Activated B cell treated with CpG ODN at 0.5 μM for 24 hours (primary cell): ENCODE measurements at regions of chr11 and their contacts with region 1.

Region 1: GRCh38 chr11:35040221-35040942 is 98.6 kb upstream of the CD44 start:
- DNase-seq: no peak
- ATAC-seq: peak; percentile 66
- H3K4me3 Mint-ChIP-seq: peak overlapping the region; percentile 77
- H3K27ac Mint-ChIP-seq: peak overlapping the region; percentile 94
- H3K4me1 Mint-ChIP-seq: peaks cover 75% of the 10 kb centered on the region
- H3K27me3 Mint-ChIP-seq: no peaks in the 10 kb centered on the region
- CTCF ChIP-seq: no peak

Region 2: GRCh38 chr11:35006389-35007128 is 33.8 kb before region 1 on chr11:
- CTCF ChIA-PET with region 1: interaction called, 4 read pairs
- POLR2A ChIA-PET with region 1: interaction called, 17 read pairs
- intact Hi-C with region 1: loop called (anchors 1 kb)
- DNase-seq: peak; percentile 27
- ATAC-seq: peak; percentile 92
- H3K4me3 Mint-ChIP-seq: peak overlapping the region; percentile 28
- H3K27ac Mint-ChIP-seq: peak overlapping the region; percentile 84
- H3K4me1 Mint-ChIP-seq: peaks cover 58% of the 10 kb centered on the region
- H3K27me3 Mint-ChIP-seq: no peaks in the 10 kb centered on the region
- CTCF ChIP-seq: no peak

Region 3: GRCh38 chr11:35058669-35059434 is 18.5 kb after region 1 on chr11:
- CTCF ChIA-PET with region 1: interaction called, 4 read pairs
- POLR2A ChIA-PET with region 1: interaction called, 12 read pairs
- intact Hi-C with region 1: no loop called
- DNase-seq: no peak
- ATAC-seq: peak; percentile 82
- H3K4me3 Mint-ChIP-seq: peak overlapping the region; percentile 17
- H3K27ac Mint-ChIP-seq: peak overlapping the region; percentile 83
- H3K4me1 Mint-ChIP-seq: peaks cover 45% of the 10 kb centered on the region
- H3K27me3 Mint-ChIP-seq: no peaks in the 10 kb centered on the region
- CTCF ChIP-seq: no peak

Region 4: DNA sequence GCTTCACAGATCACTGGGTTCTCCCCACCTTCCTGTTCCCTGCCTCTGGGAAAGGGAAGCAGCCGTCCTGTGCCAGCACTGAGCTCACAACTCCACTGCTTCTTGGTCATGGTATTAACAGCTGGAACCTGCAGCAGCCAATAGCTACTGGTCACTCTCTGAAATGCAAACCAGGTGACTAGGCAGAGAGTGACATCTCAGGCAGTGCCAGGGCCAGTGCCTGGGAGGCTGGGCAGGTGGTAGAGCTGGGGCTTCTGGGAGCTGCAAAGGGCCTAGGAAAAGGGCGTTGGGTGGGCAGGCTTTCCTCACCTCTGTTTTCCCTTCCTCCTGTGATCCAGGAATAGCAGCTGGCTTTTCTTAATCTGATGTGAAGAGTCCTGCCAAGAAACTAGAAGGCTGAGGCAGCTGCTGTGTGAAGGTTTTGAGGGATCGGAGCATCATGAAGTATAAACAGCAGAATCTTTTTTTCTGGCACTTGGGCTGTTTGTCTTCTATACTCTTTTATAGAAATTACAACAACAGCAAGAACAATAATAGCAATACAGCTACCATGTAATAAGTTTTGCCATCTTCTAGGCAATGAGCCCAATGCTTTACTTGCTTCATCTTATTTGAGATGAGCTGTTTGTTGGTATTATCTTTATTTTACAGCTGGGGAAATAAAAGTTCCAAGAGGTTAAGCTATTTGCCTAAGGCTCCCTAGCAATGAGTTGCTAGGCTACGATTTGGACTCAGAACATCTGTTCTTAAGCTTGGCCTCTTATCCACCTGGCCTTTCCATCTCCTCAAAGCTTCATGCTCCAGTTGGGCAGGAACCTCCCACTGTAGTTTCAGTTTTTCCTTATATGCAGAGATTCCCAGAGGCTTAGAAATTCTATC is 76.6 kb after region 1 on chr11:
- CTCF ChIA-PET with region 1: no interaction called
- POLR2A ChIA-PET with region 1: interaction called, 4 read pairs
- intact Hi-C with region 1: loop called (anchors 1 kb)
- DNase-seq: no peak
- ATAC-seq: no peak
- H3K4me3 Mint-ChIP-seq: no peak overlapping the region
- H3K27ac Mint-ChIP-seq: peak overlapping the region; percentile 66
- H3K4me1 Mint-ChIP-seq: peaks cover 85% of the 10 kb centered on the region
- H3K27me3 Mint-ChIP-seq: no peaks in the 10 kb centered on the region
- CTCF ChIP-seq: no peak

Region 5: DNA sequence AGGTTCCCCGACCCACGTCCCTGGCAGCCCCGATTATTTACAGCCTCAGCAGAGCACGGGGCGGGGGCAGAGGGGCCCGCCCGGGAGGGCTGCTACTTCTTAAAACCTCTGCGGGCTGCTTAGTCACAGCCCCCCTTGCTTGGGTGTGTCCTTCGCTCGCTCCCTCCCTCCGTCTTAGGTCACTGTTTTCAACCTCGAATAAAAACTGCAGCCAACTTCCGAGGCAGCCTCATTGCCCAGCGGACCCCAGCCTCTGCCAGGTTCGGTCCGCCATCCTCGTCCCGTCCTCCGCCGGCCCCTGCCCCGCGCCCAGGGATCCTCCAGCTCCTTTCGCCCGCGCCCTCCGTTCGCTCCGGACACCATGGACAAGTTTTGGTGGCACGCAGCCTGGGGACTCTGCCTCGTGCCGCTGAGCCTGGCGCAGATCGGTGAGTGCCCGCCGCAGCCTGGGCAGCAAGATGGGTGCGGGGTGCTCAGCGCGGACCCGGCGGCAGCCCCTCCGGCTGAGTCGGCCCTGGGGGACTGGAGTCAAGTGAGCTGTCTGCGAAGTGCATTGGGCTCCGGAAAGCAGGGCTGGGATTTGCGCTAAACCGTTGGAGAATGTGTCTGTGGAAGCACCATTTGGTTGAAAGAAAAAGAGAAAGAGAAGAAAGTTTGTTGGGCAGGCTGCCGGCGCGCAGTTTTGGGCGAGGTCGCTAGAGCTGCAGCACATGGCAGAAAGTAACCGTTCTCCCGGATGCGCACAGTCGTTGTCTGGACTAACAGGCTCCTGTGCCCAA is 98.8 kb after region 1 on chr11 and contains the start of gene CD44:
- CTCF ChIA-PET with region 1: interaction called, 4 read pairs
- POLR2A ChIA-PET with region 1: interaction called, 20 read pairs
- intact Hi-C with region 1: loop called (anchors 1 kb)
- DNase-seq: peak; percentile 68
- ATAC-seq: peak; percentile 79
- H3K4me3 Mint-ChIP-seq: peak within 1 kb of the TSS; percentile 97
- H3K27ac Mint-ChIP-seq: peak within 1 kb of the TSS; percentile 98
- H3K4me1 Mint-ChIP-seq: peaks cover 57% of the 10 kb centered on the region
- H3K27me3 Mint-ChIP-seq: no peaks in the 10 kb centered on the region
- CTCF ChIP-seq: no peak
- total RNA-seq, gene CD44: 1,441 and 1,546 TPM in 2 replicates

Region 6: GRCh38 chr11:35165423-35166368 is 125.3 kb after region 1 on chr11:
- CTCF ChIA-PET with region 1: interaction called, 6 read pairs
- POLR2A ChIA-PET with region 1: interaction called, 8 read pairs
- intact Hi-C with region 1: loop called (anchors 1 kb)
- DNase-seq: peak; percentile 55
- ATAC-seq: peak; percentile 68
- H3K4me3 Mint-ChIP-seq: peak overlapping the region; percentile 76
- H3K27ac Mint-ChIP-seq: peak overlapping the region; percentile 91
- H3K4me1 Mint-ChIP-seq: peaks cover 100% of the 10 kb centered on the region
- H3K27me3 Mint-ChIP-seq: no peaks in the 10 kb centered on the region
- CTCF ChIP-seq: no peak